ENCODE measurements at regions of chr6 and their contacts with region 1.

Region 1: DNA sequence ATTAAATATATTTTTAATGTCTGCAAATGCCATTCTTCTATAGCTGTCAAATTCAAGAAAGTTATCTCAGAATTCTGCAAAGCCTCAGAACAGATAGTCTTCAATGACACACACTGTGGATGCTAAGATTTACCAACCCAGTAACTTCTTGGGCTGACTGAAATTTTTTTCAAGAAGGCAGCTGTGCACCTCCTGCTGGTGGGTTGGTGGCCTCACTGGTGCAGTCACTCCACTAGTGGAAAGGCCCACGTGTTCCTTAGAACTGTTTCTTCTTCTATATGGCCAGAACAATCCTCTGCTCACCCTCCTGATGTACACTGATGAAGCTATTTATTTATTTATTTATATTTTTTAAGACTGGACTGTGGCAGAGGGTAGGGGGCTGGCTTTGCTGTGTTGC is 28.1 kb upstream of the MTCL3 start:
- DNase-seq: no peak
- ATAC-seq: no peak
- H3K4me3 ChIP-seq: no peak overlapping the region
- H3K27ac ChIP-seq: no peak overlapping the region
- H3K4me1 ChIP-seq: no peaks in the 10 kb centered on the region
- H3K27me3 ChIP-seq: no peaks in the 10 kb centered on the region
- CTCF ChIP-seq: peak in 1 of 2 donors; percentile 9

Region 2: GRCh38 chr6:127302728-127303660 is 244.2 kb before region 1 on chr6:
- intact Hi-C with region 1: loop called in 1 of 2 experiments (anchors 10 kb)
- DNase-seq: peak in 2 of 4 donors; percentile 43 to 68
- ATAC-seq: peak; percentile 77
- H3K4me3 ChIP-seq: no peak overlapping the region
- H3K27ac ChIP-seq: no peak overlapping the region
- H3K4me1 ChIP-seq: peaks cover 21 to 37% of the 10 kb centered on the region in 2 donors
- H3K27me3 ChIP-seq: no peaks in the 10 kb centered on the region
- CTCF ChIP-seq: peak; percentile 54 to 69

Measured in left lung (tissue), 14 donors.